ENCODE measurements at regions of chr2 and their contacts with region 1.

Region 1: DNA sequence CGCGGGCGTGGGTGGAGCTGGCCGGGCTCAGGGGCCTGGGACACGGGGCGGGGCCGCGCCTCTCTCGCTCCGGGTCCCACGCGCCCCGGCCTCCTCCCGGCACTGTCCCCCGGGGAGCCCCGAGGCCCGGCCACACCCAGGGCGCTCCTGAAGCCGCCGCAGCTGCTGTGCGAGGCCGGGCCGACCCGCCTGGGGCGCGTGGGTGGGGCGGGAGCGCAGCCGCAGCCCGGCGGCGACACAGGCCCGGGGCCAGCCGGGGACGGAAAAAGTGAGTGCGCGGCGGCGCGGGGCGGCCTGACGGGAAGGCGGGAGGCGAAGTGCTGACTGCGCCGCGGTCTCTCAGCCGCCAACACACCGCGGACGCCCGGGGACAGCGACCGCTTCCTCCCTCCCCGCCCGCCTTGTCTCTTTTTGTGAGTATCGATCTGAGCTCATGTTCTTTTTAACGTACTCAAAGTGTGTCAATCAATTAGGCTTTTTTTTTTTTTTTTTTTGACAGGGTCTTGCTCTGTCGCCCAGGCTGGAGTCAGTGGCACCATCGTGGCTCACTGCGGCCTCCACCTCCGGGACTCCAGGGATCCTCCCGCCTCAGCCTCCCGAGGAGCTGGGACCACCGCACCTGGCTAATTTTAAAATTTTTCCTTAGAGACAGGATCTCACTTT is 14.5 kb downstream of the PDCD1 start:
- DNase-seq: peak; percentile 90
- H3K4me3 Mint-ChIP-seq: peak overlapping the region; percentile 56
- H3K27ac Mint-ChIP-seq: peak overlapping the region; percentile 74
- H3K4me1 Mint-ChIP-seq: peaks cover 37% of the 10 kb centered on the region
- H3K27me3 Mint-ChIP-seq: peaks cover 6% of the 10 kb centered on the region

Region 2: DNA sequence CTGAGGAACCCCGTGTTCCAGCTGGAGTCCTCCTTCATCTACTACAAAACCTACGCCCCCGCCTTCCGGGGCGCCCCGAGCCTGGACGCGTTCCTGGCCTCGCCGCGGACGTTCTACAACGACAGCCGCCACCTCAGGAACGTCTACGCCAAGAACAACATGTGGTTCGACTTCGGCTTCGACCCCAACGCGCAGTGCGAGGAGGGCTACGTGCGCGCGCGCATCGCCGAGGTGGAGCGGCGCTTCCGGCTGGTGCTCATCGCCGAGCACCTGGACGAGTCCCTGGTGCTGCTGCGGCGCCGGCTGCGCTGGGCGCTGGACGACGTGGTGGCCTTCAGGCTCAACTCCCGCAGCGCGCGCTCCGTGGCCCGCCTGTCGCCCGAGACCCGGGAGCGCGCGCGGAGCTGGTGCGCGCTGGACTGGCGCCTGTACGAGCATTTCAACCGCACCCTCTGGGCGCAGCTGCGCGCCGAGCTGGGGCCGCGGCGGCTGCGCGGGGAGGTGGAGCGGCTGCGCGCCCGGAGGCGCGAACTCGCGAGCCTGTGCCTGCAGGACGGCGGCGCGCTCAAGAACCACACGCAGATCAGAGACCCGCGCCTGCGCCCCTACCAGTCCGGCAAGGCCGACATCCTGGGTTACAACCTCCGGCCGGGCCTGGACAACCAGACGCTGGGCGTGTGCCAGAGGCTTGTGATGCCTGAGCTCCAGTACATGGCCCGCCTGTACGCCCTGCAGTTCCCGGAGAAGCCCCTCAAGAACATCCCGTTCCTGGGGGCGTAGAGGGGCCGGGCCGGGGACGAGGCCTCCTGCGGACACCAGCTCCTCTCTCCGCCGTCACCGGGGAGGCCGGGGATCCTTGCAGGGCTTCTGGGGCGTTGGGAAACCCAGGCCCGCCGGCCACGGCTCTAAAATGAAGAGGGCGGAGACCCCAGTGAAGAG is 40.5 kb before region 1 on chr2:
- CTCF ChIA-PET with region 1: no interaction called
- intact Hi-C with region 1: loop called (anchors 5 kb)
- DNase-seq: peak; percentile 35
- H3K4me3 Mint-ChIP-seq: peak overlapping the region; percentile 48
- H3K27ac Mint-ChIP-seq: no peak overlapping the region
- H3K4me1 Mint-ChIP-seq: peaks cover 12% of the 10 kb centered on the region
- H3K27me3 Mint-ChIP-seq: peaks cover 8% of the 10 kb centered on the region

Region 3: DNA sequence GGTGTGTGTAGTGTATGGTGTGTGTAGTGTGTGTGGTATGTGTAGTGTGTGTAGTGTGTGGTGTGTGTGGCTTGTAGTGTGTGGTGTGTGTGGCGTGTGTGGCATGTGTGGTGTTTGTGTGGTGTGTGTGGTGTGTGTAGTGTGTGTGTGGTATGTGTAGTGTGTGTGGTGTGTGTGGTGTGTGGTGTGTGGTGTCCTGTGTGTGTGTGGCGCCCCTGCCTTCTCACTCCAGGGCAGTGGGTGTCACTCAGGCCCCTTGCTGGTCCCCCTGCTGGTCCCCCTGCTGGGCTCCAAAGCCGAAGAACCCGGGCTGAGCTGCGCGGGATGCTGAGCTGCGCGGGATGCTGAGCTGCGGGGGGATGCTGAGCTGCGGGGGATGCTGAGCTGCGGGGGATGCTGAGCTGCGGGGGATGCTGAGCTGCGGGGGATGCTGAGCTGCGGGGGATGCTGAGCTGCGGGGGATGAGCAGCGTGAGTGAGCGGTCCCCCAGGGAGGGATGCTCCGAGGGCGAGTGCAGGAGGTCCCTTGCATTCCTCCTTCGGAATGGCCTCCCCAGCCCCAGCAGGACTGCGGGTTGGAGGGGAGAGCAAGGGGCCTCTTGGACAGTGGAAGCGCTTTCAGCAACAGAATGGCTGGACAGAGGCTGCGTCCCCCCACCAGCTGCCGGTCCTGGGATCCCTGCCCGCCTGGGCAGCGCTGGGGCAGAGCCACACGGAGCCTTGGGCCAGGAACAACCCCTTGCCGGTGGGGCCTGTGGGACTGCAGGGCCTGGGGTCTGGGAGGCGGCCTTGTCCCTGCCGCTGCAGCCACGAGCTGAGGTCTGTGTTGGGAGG is 22.0 kb after region 1 on chr2:
- CTCF ChIA-PET with region 1: interaction called, 3 read pairs
- intact Hi-C with region 1: loop called (anchors 1 kb)
- DNase-seq: peak; percentile 63
- H3K4me3 Mint-ChIP-seq: no peak overlapping the region
- H3K27ac Mint-ChIP-seq: no peak overlapping the region
- H3K4me1 Mint-ChIP-seq: peaks cover 69% of the 10 kb centered on the region
- H3K27me3 Mint-ChIP-seq: peaks cover 14% of the 10 kb centered on the region

Measured in activated naive CD4-positive, alpha-beta T cell treated with anti-CD3 and anti-CD28 coated beads for 36 hours (primary cell).